ENCODE measurements at regions of chr9 and their contacts with region 1.

Region 1: DNA sequence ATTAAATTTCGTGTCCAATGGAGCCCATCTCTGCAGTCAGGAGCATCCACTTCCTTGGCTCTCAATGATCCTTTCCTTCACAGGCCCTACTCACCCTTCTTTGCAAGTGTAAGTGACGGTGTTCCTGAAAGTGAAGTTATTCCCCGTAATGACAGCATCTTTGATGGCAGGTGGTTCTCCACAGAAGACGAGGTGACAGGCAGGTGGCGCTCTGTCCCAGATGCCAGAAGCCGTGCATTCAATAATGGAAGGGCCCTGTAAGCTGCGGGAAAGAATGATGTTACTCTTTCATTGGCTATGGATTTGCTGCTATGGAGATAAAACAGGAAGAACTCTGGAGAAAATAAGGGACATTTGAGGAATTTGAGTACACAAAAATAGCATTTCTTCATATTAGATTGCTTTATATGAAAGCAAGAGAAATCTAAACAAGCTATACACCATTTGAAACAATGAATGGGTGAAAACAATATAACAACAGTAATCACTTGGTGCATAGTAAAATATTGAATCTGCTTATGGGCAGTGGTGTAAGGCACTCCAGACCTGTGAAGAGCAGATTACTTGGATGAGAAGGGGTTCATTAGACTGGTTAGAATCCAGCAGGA is 89.9 kb upstream of the TXNDC8 start:
- DNase-seq: no peak
- ATAC-seq: no peak
- H3K4me3 ChIP-seq: no peak overlapping the region
- H3K4me3 Mint-ChIP-seq: no peak overlapping the region
- H3K27ac ChIP-seq: no peak overlapping the region
- H3K27ac Mint-ChIP-seq: no peak overlapping the region
- H3K4me1 ChIP-seq: no peaks in the 10 kb centered on the region
- H3K4me1 Mint-ChIP-seq: no peaks in the 10 kb centered on the region
- H3K27me3 ChIP-seq: no peaks in the 10 kb centered on the region
- H3K27me3 Mint-ChIP-seq: peaks cover 0 to 6% (median 0%) of the 10 kb centered on the region in 5 donors

Region 2: DNA sequence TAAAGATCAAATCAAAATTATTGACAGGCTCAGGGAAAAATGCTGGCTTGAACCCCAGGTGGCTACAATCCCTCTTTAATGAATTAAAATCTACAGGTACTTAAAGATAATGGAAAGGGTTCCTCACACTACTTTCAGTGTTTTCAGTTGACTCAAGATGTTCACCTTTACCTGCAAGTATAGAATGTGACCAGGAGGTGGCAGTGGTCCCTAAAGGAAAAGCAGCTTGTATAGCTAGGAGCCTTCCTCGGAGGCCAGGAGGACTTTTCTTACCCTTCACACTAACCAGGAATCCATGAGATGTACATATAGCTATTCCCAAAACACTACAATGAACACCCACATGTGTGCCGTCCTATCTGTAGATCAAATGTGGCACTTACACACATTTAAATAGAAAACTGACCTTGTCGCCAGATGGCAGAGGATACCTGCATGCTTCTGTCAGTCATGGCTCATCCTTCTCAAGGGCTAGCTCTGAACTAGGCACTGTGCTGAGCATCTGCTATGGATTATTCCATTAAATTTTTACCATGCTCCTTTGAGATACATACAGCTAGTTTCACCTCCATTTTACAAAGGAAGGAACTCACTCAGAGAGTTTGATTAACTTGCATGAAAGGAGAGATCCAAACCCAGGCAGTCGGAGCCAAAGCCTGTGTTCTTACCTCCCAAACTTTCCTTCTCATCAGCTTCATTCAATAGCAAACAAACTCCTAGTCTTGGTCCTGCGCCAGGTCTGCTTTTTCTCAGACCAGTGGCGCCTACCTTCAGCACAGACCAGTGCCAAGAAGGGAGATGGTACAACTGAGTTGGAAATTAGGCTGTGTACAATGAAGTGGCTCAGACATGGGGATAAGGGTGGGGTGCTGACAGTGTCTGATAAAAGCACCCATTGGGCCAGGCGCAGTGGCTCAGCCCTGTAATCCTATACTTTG is 244.1 kb before region 1 on chr9:
- CTCF ChIA-PET with region 1: no interaction called
- POLR2A ChIA-PET with region 1: no interaction called
- intact Hi-C with region 1: loop called in 1 of 2 experiments (anchors 5 kb)
- DNase-seq: peak in 8 of 9 donors; percentile 10 to 58 (median 40)
- ATAC-seq: peak; percentile 71
- H3K4me3 ChIP-seq: no peak overlapping the region
- H3K4me3 Mint-ChIP-seq: no peak overlapping the region
- H3K27ac ChIP-seq: no peak overlapping the region
- H3K27ac Mint-ChIP-seq: no peak overlapping the region
- H3K4me1 ChIP-seq: no peaks in the 10 kb centered on the region
- H3K4me1 Mint-ChIP-seq: peaks cover 0 to 16% (median 0%) of the 10 kb centered on the region in 7 donors
- H3K27me3 ChIP-seq: no peaks in the 10 kb centered on the region
- H3K27me3 Mint-ChIP-seq: peaks cover 0 to 2% (median 0%) of the 10 kb centered on the region in 5 donors

Measured in naive thymus-derived CD4-positive, alpha-beta T cell (primary cell).